ENCODE measurements at regions of chr20 and their contacts with region 1.

Region 1: DNA sequence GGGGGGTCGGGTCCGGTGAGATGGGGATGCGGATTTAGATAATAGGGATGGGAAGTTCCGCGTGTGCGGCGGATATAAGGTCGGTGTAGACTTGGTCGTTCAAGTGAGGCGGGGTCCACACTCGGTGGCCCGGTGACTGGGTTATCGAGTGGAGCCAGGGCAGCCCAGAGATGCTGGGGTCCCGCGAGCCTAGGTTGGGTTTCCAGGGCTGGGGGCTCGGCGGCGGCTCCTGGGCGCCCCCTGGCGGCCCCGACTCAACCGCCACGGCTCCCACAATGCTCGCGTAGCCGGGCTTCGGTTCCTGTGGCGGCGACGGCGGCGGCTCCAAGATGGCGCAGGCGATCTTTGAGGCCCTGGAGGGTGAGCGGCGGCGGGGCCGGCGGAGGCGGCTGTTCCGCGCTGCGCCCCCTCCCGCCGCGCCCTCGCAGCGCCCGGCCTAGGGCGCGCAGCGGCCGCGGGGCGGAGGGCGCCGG is at the start of gene ZNF341:
- DNase-seq: peak; percentile 72 to 83
- ATAC-seq: peak in 1 of 2 donors; percentile 79
- H3K4me3 ChIP-seq: peak within 1 kb of the TSS; percentile 61 to 73 (median 70)
- H3K27ac ChIP-seq: peak within 1 kb of the TSS; percentile 77 to 97 (median 90)
- H3K4me1 ChIP-seq: peaks cover 14 to 15% of the 10 kb centered on the region in 2 donors
- H3K27me3 ChIP-seq: no peaks in the 10 kb centered on the region
- CTCF ChIP-seq: peak; percentile 89 to 94 (median 92)
- POLR2A ChIP-seq: no peak
- total RNA-seq, gene ZNF341: 1.8 to 4.6 (median 2.6) TPM

Region 2: GRCh38 chr20:33305589-33306057 is 426.1 kb before region 1 on chr20:
- in situ Hi-C with region 1: no loop called
- intact Hi-C with region 1: no loop called
- DNase-seq: no peak
- ATAC-seq: no peak
- H3K4me3 ChIP-seq: no peak overlapping the region
- H3K27ac ChIP-seq: no peak overlapping the region
- H3K4me1 ChIP-seq: no peaks in the 10 kb centered on the region
- H3K27me3 ChIP-seq: no peaks in the 10 kb centered on the region
- CTCF ChIP-seq: no peak
- POLR2A ChIP-seq: no peak

Region 3: DNA sequence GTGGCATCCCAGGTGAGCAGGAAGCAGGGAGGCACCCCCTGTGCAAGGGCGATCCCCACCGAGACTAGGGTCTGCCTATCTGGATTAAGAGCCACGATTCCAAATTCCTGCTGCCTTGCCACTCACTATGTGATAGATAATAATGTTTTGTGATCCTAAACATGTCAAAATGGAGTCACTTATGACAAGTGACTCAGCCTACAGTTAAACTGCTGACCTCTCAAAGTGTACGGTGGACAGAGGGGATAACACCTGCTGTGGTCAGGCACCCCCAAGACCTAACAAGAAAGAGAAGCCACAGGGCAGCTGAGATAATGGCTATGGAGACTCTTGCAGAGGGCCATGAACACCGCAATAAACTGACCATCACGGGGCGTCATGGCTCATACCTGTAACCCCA is 272.1 kb before region 1 on chr20:
- in situ Hi-C with region 1: no loop called
- intact Hi-C with region 1: loop called (anchors 5 kb)
- DNase-seq: no peak
- ATAC-seq: no peak
- H3K4me3 ChIP-seq: no peak overlapping the region
- H3K27ac ChIP-seq: no peak overlapping the region
- H3K4me1 ChIP-seq: no peaks in the 10 kb centered on the region
- H3K27me3 ChIP-seq: no peaks in the 10 kb centered on the region
- CTCF ChIP-seq: no peak
- POLR2A ChIP-seq: no peak

Region 4: GRCh38 chr20:33674295-33675135 is 57.2 kb before region 1 on chr20 and contains the start of gene NECAB3:
- in situ Hi-C with region 1: no loop called
- intact Hi-C with region 1: loop called (anchors 5 kb)
- DNase-seq: peak; percentile 66 to 85
- ATAC-seq: peak; percentile 80 to 84
- H3K4me3 ChIP-seq: peak within 1 kb of the TSS; percentile 78 to 91 (median 83)
- H3K27ac ChIP-seq: peak within 1 kb of the TSS; percentile 89 to 96 (median 93)
- H3K4me1 ChIP-seq: peaks cover 18 to 23% of the 10 kb centered on the region in 2 donors
- H3K27me3 ChIP-seq: no peaks in the 10 kb centered on the region
- CTCF ChIP-seq: no peak
- POLR2A ChIP-seq: peak; percentile 82 to 87
- total RNA-seq, gene NECAB3: 72.3 to 127 (median 107) TPM

Measured in gastrocnemius medialis (tissue), 4 donors.